CD4-positive, alpha-beta memory T cell (primary cell): ENCODE measurements at regions of chr13 and their contacts with region 1.

Region 1: GRCh38 chr13:94327318-94327717 is 152.2 kb downstream of the DCT start:
- DNase-seq: peak in 3 of 5 donors; percentile 36 to 43 (median 38)
- H3K4me3 ChIP-seq: peak overlapping the region in 1 of 2 donors; percentile 7
- H3K4me3 Mint-ChIP-seq: peak overlapping the region; percentile 34 to 85 (median 78)
- H3K27ac ChIP-seq: no peak overlapping the region
- H3K27ac Mint-ChIP-seq: peak overlapping the region in 6 of 7 donors; percentile 3 to 77 (median 50)
- H3K4me1 ChIP-seq: peaks cover 86% of the 10 kb centered on the region
- H3K4me1 Mint-ChIP-seq: peaks cover 55 to 92% (median 78%) of the 10 kb centered on the region in 4 donors
- H3K27me3 ChIP-seq: no peaks in the 10 kb centered on the region
- H3K27me3 Mint-ChIP-seq: peaks cover 9 to 13% of the 10 kb centered on the region in 2 donors

Region 2: GRCh38 chr13:94209117-94209516 is 118.2 kb before region 1 on chr13:
- CTCF ChIA-PET with region 1: no interaction called
- POLR2A ChIA-PET with region 1: no interaction called
- intact Hi-C with region 1: no loop called
- DNase-seq: no peak
- H3K4me3 ChIP-seq: no peak overlapping the region
- H3K4me3 Mint-ChIP-seq: no peak overlapping the region
- H3K27ac ChIP-seq: no peak overlapping the region
- H3K27ac Mint-ChIP-seq: no peak overlapping the region
- H3K4me1 ChIP-seq: no peaks in the 10 kb centered on the region
- H3K4me1 Mint-ChIP-seq: peaks cover 0 to 6% (median 4%) of the 10 kb centered on the region in 4 donors
- H3K27me3 ChIP-seq: no peaks in the 10 kb centered on the region
- H3K27me3 Mint-ChIP-seq: peaks cover 0 to 1% of the 10 kb centered on the region in 2 donors

Region 3: DNA sequence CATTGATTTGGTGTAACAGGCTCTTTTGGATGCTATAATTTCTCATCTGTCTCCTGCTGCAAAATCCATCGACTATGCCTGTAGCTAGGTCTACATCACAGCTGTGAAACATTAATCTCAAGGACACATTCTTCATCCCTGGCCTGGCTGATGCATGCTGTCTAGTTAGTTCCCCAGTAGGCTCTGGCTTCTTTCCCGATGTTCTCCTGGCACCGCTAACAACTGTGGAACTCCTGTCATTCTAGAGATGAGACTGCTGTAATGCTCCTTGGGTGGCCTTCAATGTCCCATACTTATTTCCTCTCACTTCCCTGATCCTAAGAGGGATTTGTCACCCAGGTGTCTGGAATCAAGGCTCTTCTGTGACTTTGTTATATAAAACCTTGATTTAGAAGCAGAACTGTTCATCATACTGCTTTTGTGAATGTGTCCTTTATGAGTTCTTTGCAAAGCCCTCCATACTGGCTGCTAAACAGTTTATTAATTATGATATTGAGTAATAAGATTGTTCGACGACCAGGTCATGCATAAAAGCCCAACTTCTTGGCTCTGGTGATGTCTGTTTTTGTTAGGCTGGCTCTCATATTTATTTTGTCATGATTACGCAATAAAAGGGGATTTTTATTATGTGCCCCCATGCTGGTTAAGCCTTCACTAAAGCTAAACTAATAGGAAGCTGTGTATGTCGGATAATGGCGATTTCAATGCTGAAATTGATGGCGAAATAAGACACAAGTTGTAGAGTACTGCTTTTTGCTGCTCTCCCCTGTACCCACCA is 75.3 kb before region 1 on chr13:
- CTCF ChIA-PET with region 1: interaction called, 3 read pairs
- POLR2A ChIA-PET with region 1: no interaction called
- intact Hi-C with region 1: loop called (anchors 10 kb)
- DNase-seq: no peak
- H3K4me3 ChIP-seq: no peak overlapping the region
- H3K4me3 Mint-ChIP-seq: no peak overlapping the region
- H3K27ac ChIP-seq: no peak overlapping the region
- H3K27ac Mint-ChIP-seq: no peak overlapping the region
- H3K4me1 ChIP-seq: no peaks in the 10 kb centered on the region
- H3K4me1 Mint-ChIP-seq: peaks cover 0 to 3% (median under 1%) of the 10 kb centered on the region in 4 donors
- H3K27me3 ChIP-seq: no peaks in the 10 kb centered on the region
- H3K27me3 Mint-ChIP-seq: peaks cover 5% of the 10 kb centered on the region in 2 donors

Region 4: GRCh38 chr13:94312511-94313216 is 14.7 kb before region 1 on chr13:
- CTCF ChIA-PET with region 1: interaction called, 7 read pairs
- POLR2A ChIA-PET with region 1: interaction called, 28 read pairs
- intact Hi-C with region 1: no loop called
- DNase-seq: peak in 1 of 5 donors; percentile 20
- H3K4me3 ChIP-seq: peak overlapping the region in 1 of 2 donors; percentile 3
- H3K4me3 Mint-ChIP-seq: peak overlapping the region; percentile 5 to 78 (median 71)
- H3K27ac ChIP-seq: no peak overlapping the region
- H3K27ac Mint-ChIP-seq: peak overlapping the region; percentile 30 to 92 (median 81)
- H3K4me1 ChIP-seq: peaks cover 15% of the 10 kb centered on the region
- H3K4me1 Mint-ChIP-seq: peaks cover 0 to 22% (median 13%) of the 10 kb centered on the region in 4 donors
- H3K27me3 ChIP-seq: no peaks in the 10 kb centered on the region
- H3K27me3 Mint-ChIP-seq: peaks cover 0 to 1% of the 10 kb centered on the region in 2 donors

Region 5: GRCh38 chr13:94345374-94346195 is 18.3 kb after region 1 on chr13:
- CTCF ChIA-PET with region 1: interaction called, 29 read pairs
- POLR2A ChIA-PET with region 1: interaction called, 3 read pairs
- intact Hi-C with region 1: no loop called
- DNase-seq: peak in 4 of 5 donors; percentile 30 to 50 (median 42)
- H3K4me3 ChIP-seq: no peak overlapping the region
- H3K4me3 Mint-ChIP-seq: no peak overlapping the region
- H3K27ac ChIP-seq: no peak overlapping the region
- H3K27ac Mint-ChIP-seq: no peak overlapping the region
- H3K4me1 ChIP-seq: no peaks in the 10 kb centered on the region
- H3K4me1 Mint-ChIP-seq: peaks cover 4 to 6% (median 6%) of the 10 kb centered on the region in 4 donors
- H3K27me3 ChIP-seq: no peaks in the 10 kb centered on the region
- H3K27me3 Mint-ChIP-seq: peaks cover 7 to 13% of the 10 kb centered on the region in 2 donors

Region 6: GRCh38 chr13:94362411-94362909 is 35.1 kb after region 1 on chr13:
- CTCF ChIA-PET with region 1: interaction called, 14 read pairs
- POLR2A ChIA-PET with region 1: no interaction called
- intact Hi-C with region 1: no loop called
- DNase-seq: peak; percentile 65 to 69 (median 67)
- H3K4me3 ChIP-seq: no peak overlapping the region
- H3K4me3 Mint-ChIP-seq: no peak overlapping the region
- H3K27ac ChIP-seq: no peak overlapping the region
- H3K27ac Mint-ChIP-seq: no peak overlapping the region
- H3K4me1 ChIP-seq: no peaks in the 10 kb centered on the region
- H3K4me1 Mint-ChIP-seq: peaks cover 0 to 3% (median 2%) of the 10 kb centered on the region in 4 donors
- H3K27me3 ChIP-seq: no peaks in the 10 kb centered on the region
- H3K27me3 Mint-ChIP-seq: peaks cover 7 to 11% of the 10 kb centered on the region in 2 donors

Region 7: DNA sequence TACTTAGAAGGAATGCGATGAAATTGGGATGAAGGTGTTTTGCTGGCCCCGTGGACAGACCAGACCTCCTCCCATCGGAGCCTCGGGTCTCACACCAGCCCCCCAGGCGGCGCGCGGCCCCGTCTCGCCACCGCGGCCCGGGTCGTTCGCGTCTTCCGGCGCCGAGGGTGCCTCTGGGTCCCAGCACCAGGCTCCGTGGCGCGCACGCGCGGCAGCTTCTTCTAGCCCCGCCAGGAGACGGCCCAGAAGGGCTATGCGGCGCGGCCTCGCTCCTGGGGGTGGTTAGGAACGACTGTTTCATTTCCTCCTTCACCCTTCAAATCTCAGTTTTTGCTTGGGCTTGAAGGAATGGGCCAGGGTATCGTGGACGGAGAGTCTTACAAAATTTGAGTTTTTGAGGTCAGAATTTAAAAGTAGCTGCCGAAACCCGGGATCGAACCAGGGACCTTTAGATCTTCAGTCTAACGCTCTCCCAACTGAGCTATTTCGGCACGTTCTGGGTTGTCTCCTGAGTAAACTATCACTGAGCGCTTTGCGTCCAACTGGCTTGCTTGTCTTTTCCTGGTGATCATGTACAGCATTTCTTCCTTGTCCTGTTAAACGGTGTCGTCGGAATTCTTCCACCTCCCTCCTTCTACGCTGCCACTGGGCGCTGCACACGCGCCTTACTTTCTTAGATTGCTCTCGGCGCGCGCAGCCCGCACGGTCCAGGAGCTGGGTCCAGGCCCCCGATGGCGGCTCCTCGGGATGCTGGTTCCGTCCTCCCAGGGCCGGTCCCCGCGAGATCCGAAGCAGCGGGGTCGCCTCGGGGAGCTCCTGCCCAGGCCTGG is 222.1 kb after region 1 on chr13:
- CTCF ChIA-PET with region 1: no interaction called
- POLR2A ChIA-PET with region 1: no interaction called
- intact Hi-C with region 1: loop called (anchors 1 kb)
- DNase-seq: peak; percentile 92 to 94 (median 93)
- H3K4me3 ChIP-seq: peak overlapping the region; percentile 63 to 98
- H3K4me3 Mint-ChIP-seq: peak overlapping the region; percentile 88 to 95 (median 93)
- H3K27ac ChIP-seq: peak overlapping the region; percentile 87
- H3K27ac Mint-ChIP-seq: peak overlapping the region; percentile 94 to 100 (median 96)
- H3K4me1 ChIP-seq: peaks cover 15% of the 10 kb centered on the region
- H3K4me1 Mint-ChIP-seq: peaks cover 11 to 26% (median 17%) of the 10 kb centered on the region in 4 donors
- H3K27me3 ChIP-seq: no peaks in the 10 kb centered on the region
- H3K27me3 Mint-ChIP-seq: peaks cover 2 to 5% of the 10 kb centered on the region in 2 donors

Region 8: DNA sequence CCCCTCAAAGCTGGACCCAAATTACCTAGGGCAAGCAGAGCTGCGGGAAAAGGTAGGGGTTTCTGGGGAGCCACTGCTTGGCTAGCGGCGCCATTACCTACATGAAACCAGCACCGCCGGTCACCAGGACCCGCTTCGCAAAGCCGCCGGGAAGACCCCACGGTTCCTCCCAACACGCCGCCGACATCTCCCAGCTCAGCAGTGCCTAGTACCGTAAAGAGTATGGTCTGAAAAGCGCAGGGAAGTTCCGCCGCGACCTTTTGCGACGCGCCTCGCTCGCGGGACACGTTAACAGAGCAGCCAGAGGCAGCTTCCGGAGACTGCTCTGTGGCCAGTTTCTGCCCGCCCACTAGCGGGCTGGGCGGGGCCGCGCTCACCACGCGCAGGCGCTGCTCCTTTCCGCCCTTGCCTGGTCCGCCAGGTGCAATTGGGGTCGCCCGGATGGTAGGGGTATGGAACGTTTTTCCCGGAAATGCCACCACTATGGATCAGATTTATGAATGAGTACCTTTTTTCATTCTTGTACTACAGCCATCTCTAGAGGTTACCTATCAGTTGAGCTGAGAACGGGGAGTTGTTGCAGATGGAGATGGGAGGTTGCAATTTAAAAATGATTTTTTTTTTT is 268.7 kb after region 1 on chr13 and contains the start of gene TGDS:
- CTCF ChIA-PET with region 1: no interaction called
- POLR2A ChIA-PET with region 1: interaction called, 4 read pairs
- intact Hi-C with region 1: loop called (anchors 5 kb)
- DNase-seq: peak; percentile 86 to 90 (median 88)
- H3K4me3 ChIP-seq: peak within 1 kb of the TSS; percentile 78 to 87
- H3K4me3 Mint-ChIP-seq: peak within 1 kb of the TSS; percentile 92 to 98 (median 94)
- H3K27ac ChIP-seq: peak within 1 kb of the TSS; percentile 75
- H3K27ac Mint-ChIP-seq: peak within 1 kb of the TSS; percentile 85 to 97 (median 94)
- H3K4me1 ChIP-seq: peaks cover 34% of the 10 kb centered on the region
- H3K4me1 Mint-ChIP-seq: peaks cover 28 to 43% (median 37%) of the 10 kb centered on the region in 4 donors
- H3K27me3 ChIP-seq: no peaks in the 10 kb centered on the region
- H3K27me3 Mint-ChIP-seq: no peaks in the 10 kb centered on the region
- total RNA-seq, gene TGDS: 15.9 to 16.8 TPM